ENCODE measurements at regions of chr11 and their contacts with region 1.

Region 1: GRCh38 chr11:113875234-113876073 is at the start of gene USP28:
- DNase-seq: peak; percentile 95
- ATAC-seq: peak; percentile 89
- H3K4me3 Mint-ChIP-seq: peak within 1 kb of the TSS; percentile 89
- H3K27ac Mint-ChIP-seq: peak within 1 kb of the TSS; percentile 100
- H3K4me1 Mint-ChIP-seq: peaks cover 52% of the 10 kb centered on the region
- H3K27me3 Mint-ChIP-seq: peaks cover 2% of the 10 kb centered on the region; the same call in 1 of the 2 replicates
- CTCF ChIP-seq: no peak
- total RNA-seq, gene USP28: 129 to 142 TPM (median 138 TPM) in 3 replicates

Region 2: DNA sequence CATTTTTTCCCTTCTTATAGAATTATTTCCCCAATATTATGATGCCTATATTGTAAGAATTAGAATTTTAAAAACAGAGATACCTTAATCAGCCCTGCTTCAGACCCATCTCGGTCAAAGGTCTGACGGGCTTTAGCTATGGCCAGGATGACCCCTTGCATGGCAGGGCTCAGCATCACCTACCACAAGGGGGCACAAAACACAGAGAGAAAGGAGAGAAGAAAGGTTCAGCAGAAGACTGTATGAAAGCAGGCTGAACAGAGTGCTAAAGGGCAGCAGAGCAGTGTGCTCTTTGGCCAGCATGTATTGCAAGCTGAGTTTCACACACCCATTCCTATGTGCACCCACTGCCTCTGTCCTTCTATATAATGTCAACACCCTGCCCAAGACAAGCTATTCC is 69.0 kb before region 1 on chr11:
- CTCF ChIA-PET with region 1: interaction called, 14 read pairs
- POLR2A ChIA-PET with region 1: no interaction called
- DNase-seq: peak; percentile 68
- ATAC-seq: peak; percentile 99
- H3K4me3 Mint-ChIP-seq: no peak overlapping the region
- H3K27ac Mint-ChIP-seq: no peak overlapping the region
- H3K4me1 Mint-ChIP-seq: no peaks in the 10 kb centered on the region
- H3K27me3 Mint-ChIP-seq: no peaks in the 10 kb centered on the region
- CTCF ChIP-seq: peak; percentile 35; the same call in 1 of the 2 replicates

Region 3: DNA sequence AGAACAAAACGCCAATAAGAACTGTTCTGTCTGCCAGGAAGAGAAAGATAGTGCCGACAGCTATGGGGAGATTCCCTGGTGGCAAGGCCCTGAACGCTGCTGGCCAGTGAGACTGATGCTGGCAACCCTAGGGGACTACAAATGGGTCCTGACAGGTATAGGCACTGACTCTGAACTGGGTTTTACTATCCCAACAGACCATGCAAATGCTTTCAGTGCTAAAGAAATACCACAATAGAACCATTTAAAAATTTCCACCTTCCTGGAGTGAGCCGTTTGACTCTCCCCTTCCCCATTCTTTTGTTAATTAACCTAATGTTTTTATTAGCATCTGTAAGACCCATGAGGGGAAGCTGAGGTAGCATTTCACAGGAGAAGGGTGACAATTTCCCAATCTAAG is 25.7 kb before region 1 on chr11:
- CTCF ChIA-PET with region 1: no interaction called
- POLR2A ChIA-PET with region 1: interaction called, 11 read pairs
- DNase-seq: peak; percentile 41
- ATAC-seq: peak; percentile 97
- H3K4me3 Mint-ChIP-seq: peak overlapping the region; percentile 10
- H3K27ac Mint-ChIP-seq: peak overlapping the region; percentile 97
- H3K4me1 Mint-ChIP-seq: peaks cover 72% of the 10 kb centered on the region
- H3K27me3 Mint-ChIP-seq: no peaks in the 10 kb centered on the region
- CTCF ChIP-seq: no peak